Activated CD8-positive, alpha-beta T cell treated with anti-CD3 and anti-CD28 coated beads for 36 hours (primary cell): ENCODE measurements at regions of chr9 and their contacts with region 1.

Region 1: GRCh38 chr9:19988281-19988680 is 199.4 kb upstream of the SLC24A2 start:
- DNase-seq: no peak
- ATAC-seq: no peak
- H3K4me3 Mint-ChIP-seq: no peak overlapping the region
- H3K27ac Mint-ChIP-seq: no peak overlapping the region
- H3K4me1 Mint-ChIP-seq: peaks cover 13% of the 10 kb centered on the region
- H3K27me3 Mint-ChIP-seq: no peaks in the 10 kb centered on the region
- CTCF ChIP-seq: no peak

Region 2: DNA sequence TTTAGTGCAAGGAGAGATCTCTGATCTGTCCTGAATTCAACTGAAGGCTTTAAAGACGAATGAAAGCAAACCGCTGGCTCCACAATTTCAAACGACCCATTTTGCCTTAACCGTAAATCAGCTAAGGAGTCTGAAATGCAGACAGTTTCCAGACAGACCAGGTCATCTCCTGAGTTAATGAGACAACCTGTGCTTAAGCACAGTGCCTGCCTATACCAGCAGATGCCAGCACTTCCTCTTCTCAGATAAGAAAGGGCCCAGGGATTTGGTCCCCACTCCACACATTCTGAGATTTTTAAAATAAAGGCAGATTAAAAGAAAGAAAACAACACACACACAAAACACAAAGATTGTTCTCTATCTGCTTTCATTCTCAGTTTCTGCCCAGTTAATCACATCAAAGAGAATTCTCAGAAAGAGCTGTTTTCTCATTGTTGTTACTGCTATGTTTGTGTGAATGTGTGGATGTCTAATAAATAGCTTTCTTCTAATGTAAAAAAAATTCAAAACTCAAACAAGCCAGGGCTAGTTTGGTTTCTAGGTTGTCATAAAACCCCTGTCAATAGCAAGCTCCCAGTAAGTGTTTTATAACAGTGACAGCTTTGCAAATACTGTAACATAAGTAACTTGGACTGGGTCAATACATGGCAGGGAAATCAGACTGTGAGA is 41.7 kb before region 1 on chr9:
- CTCF ChIA-PET with region 1: interaction called, 11 read pairs
- POLR2A ChIA-PET with region 1: no interaction called
- intact Hi-C with region 1: no loop called
- DNase-seq: peak; percentile 35
- ATAC-seq: peak; percentile 85
- H3K4me3 Mint-ChIP-seq: no peak overlapping the region
- H3K27ac Mint-ChIP-seq: no peak overlapping the region
- H3K4me1 Mint-ChIP-seq: peaks cover 4% of the 10 kb centered on the region
- H3K27me3 Mint-ChIP-seq: peaks cover 7% of the 10 kb centered on the region
- CTCF ChIP-seq: peak; percentile 24

Region 3: DNA sequence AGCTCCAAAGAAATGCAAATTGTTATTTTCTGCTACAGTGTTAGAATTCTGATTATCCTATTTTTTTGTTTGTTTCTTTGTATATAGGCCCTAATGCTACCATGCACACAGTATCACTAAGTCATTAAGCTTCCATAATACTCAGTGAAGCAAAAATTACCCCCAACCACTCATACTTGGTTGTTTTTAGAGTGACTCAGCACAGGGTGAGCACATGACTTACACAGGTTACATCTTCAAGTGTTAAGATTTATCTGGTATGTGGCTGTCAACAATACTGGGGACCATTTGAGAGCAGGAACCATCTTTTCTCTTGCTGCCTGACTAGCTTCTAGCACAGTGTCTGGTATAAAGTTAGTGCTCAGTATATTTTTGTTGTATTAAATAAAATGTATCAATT is 56.4 kb after region 1 on chr9:
- CTCF ChIA-PET with region 1: no interaction called
- POLR2A ChIA-PET with region 1: no interaction called
- intact Hi-C with region 1: no loop called
- DNase-seq: no peak
- ATAC-seq: no peak
- H3K4me3 Mint-ChIP-seq: no peak overlapping the region
- H3K27ac Mint-ChIP-seq: no peak overlapping the region
- H3K4me1 Mint-ChIP-seq: peaks cover 26% of the 10 kb centered on the region
- H3K27me3 Mint-ChIP-seq: no peaks in the 10 kb centered on the region
- CTCF ChIP-seq: no peak